ENCODE measurements at regions of chr1 and their contacts with region 1.

Region 1: GRCh38 chr1:55893155-55893554 is 678.0 kb upstream of the USP24 start:
- DNase-seq: peak; percentile 15
- H3K4me3 Mint-ChIP-seq: no peak overlapping the region
- H3K27ac Mint-ChIP-seq: no peak overlapping the region
- H3K4me1 Mint-ChIP-seq: no peaks in the 10 kb centered on the region
- H3K27me3 Mint-ChIP-seq: no peaks in the 10 kb centered on the region
- CTCF ChIP-seq: no peak

Region 2: DNA sequence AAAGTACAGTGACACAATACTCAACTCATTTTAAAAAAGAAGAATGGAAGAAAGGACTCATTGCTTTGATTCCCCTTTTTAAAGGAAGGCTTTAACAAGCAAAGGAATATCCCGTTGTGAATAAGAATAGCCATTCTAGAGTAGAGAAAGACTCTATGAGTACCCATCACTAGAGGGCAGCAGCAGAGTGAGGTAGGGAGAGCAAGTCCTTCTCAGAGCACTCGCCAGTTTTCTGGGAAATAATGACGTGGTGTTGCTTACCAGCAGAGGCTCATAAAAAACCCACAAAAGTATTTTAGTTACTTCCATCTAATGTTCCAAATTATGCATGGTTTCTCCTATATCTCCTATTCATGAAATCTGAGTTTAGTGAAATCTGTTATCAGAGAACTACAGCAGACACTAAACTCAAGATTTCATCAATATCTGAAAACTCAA is 752.6 kb before region 1 on chr1:
- CTCF ChIA-PET with region 1: no interaction called
- intact Hi-C with region 1: loop called (anchors 10 kb)
- DNase-seq: peak; percentile 75
- H3K4me3 Mint-ChIP-seq: no peak overlapping the region
- H3K27ac Mint-ChIP-seq: no peak overlapping the region
- H3K4me1 Mint-ChIP-seq: no peaks in the 10 kb centered on the region
- H3K27me3 Mint-ChIP-seq: no peaks in the 10 kb centered on the region
- CTCF ChIP-seq: peak; percentile 55

Region 3: DNA sequence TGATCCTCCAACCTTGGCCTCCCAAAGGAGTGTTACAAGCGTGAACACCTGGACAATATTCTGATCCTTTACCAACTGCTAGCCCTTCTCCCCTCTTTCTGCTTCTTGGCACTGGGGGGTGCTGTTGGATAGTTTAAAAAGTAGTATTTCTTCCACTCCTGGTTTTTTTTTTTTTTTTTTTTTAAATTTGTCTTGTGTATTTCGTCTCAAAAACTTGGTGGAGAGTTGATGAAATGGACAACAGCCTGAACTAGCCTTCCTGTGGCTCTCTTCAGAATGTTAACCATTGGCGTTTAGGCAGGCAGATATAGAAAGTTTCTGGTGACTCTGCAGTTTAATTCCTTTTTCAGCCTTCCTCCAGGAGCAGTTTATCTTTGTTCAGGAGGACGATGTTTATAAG is 608.3 kb before region 1 on chr1:
- CTCF ChIA-PET with region 1: no interaction called
- intact Hi-C with region 1: loop called (anchors 5 kb)
- DNase-seq: peak; percentile 55
- H3K4me3 Mint-ChIP-seq: no peak overlapping the region
- H3K27ac Mint-ChIP-seq: no peak overlapping the region
- H3K4me1 Mint-ChIP-seq: peaks cover 13% of the 10 kb centered on the region
- H3K27me3 Mint-ChIP-seq: no peaks in the 10 kb centered on the region
- CTCF ChIP-seq: peak; percentile 70

Region 4: GRCh38 chr1:55375617-55376258 is 517.4 kb before region 1 on chr1:
- CTCF ChIA-PET with region 1: interaction called, 3 read pairs
- intact Hi-C with region 1: loop called (anchors 5 kb)
- DNase-seq: peak; percentile 61
- H3K4me3 Mint-ChIP-seq: no peak overlapping the region
- H3K27ac Mint-ChIP-seq: no peak overlapping the region
- H3K4me1 Mint-ChIP-seq: no peaks in the 10 kb centered on the region
- H3K27me3 Mint-ChIP-seq: peaks cover 3% of the 10 kb centered on the region
- CTCF ChIP-seq: peak; percentile 95

Region 5: DNA sequence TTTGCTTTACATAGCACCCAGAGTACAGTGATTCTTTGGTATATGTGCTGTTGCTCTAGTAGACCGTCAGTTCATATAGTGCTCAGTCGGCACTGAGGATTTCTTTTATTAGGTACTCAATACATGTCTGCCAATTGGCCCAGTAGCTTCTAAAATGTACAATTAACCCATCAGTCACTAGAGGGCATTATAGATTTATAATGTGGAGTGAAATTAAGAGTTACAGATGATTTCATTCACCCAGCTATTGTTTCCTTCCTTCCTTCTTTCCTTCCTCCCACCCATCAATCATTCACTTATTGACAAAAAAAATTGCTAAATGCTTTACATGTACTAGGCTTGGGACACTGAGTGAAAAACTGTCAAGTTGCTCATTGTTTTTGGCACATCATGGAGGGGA is 414.4 kb before region 1 on chr1:
- CTCF ChIA-PET with region 1: no interaction called
- intact Hi-C with region 1: loop called (anchors 5 kb)
- DNase-seq: no peak
- H3K4me3 Mint-ChIP-seq: no peak overlapping the region
- H3K27ac Mint-ChIP-seq: no peak overlapping the region
- H3K4me1 Mint-ChIP-seq: peaks cover 43% of the 10 kb centered on the region
- H3K27me3 Mint-ChIP-seq: no peaks in the 10 kb centered on the region
- CTCF ChIP-seq: no peak

Region 6: GRCh38 chr1:56169856-56170255 is 276.7 kb after region 1 on chr1:
- CTCF ChIA-PET with region 1: no interaction called
- intact Hi-C with region 1: no loop called
- DNase-seq: no peak
- H3K4me3 Mint-ChIP-seq: no peak overlapping the region
- H3K27ac Mint-ChIP-seq: no peak overlapping the region
- H3K4me1 Mint-ChIP-seq: no peaks in the 10 kb centered on the region
- H3K27me3 Mint-ChIP-seq: no peaks in the 10 kb centered on the region
- CTCF ChIP-seq: no peak

Measured in Calu3 (cell line).